Caco-2 (cell line): ENCODE measurements at regions of chr7 and their contacts with region 1.

Region 1: GRCh38 chr7:130941322-130942210 is 207.6 kb upstream of the KLF14 start:
- DNase-seq: peak; percentile 66 to 76
- H3K4me3 ChIP-seq: peak overlapping the region; percentile 45
- H3K4me3 Mint-ChIP-seq: peak overlapping the region; percentile 91
- H3K27ac Mint-ChIP-seq: peak overlapping the region; percentile 96
- H3K4me1 ChIP-seq: peaks cover 7% of the 10 kb centered on the region; the same call in 1 of the 2 replicates
- H3K4me1 Mint-ChIP-seq: peaks cover 16% of the 10 kb centered on the region
- H3K27me3 ChIP-seq: no peaks in the 10 kb centered on the region
- H3K27me3 Mint-ChIP-seq: no peaks in the 10 kb centered on the region
- CTCF ChIP-seq: no peak

Region 2: GRCh38 chr7:130875265-130875741 is 66.3 kb before region 1 on chr7:
- CTCF ChIA-PET with region 1: no interaction called
- POLR2A ChIA-PET with region 1: no interaction called
- intact Hi-C with region 1: no loop called
- DNase-seq: peak; percentile 75 to 86
- H3K4me3 ChIP-seq: no peak overlapping the region
- H3K4me3 Mint-ChIP-seq: no peak overlapping the region
- H3K27ac Mint-ChIP-seq: no peak overlapping the region
- H3K4me1 ChIP-seq: no peaks in the 10 kb centered on the region
- H3K4me1 Mint-ChIP-seq: no peaks in the 10 kb centered on the region
- H3K27me3 ChIP-seq: no peaks in the 10 kb centered on the region
- H3K27me3 Mint-ChIP-seq: no peaks in the 10 kb centered on the region
- CTCF ChIP-seq: peak; percentile 90 to 98

Region 3: GRCh38 chr7:130912862-130913631 is 28.5 kb before region 1 on chr7:
- CTCF ChIA-PET with region 1: interaction called, 5 read pairs
- POLR2A ChIA-PET with region 1: interaction called, 5 read pairs
- intact Hi-C with region 1: loop called (anchors 1 kb)
- DNase-seq: peak; percentile 47 to 55
- H3K4me3 ChIP-seq: peak overlapping the region; percentile 48
- H3K4me3 Mint-ChIP-seq: peak overlapping the region; percentile 94
- H3K27ac Mint-ChIP-seq: peak overlapping the region; percentile 95
- H3K4me1 ChIP-seq: peaks cover 28% of the 10 kb centered on the region
- H3K4me1 Mint-ChIP-seq: peaks cover 37% of the 10 kb centered on the region
- H3K27me3 ChIP-seq: no peaks in the 10 kb centered on the region
- H3K27me3 Mint-ChIP-seq: no peaks in the 10 kb centered on the region
- CTCF ChIP-seq: no peak

Region 4: DNA sequence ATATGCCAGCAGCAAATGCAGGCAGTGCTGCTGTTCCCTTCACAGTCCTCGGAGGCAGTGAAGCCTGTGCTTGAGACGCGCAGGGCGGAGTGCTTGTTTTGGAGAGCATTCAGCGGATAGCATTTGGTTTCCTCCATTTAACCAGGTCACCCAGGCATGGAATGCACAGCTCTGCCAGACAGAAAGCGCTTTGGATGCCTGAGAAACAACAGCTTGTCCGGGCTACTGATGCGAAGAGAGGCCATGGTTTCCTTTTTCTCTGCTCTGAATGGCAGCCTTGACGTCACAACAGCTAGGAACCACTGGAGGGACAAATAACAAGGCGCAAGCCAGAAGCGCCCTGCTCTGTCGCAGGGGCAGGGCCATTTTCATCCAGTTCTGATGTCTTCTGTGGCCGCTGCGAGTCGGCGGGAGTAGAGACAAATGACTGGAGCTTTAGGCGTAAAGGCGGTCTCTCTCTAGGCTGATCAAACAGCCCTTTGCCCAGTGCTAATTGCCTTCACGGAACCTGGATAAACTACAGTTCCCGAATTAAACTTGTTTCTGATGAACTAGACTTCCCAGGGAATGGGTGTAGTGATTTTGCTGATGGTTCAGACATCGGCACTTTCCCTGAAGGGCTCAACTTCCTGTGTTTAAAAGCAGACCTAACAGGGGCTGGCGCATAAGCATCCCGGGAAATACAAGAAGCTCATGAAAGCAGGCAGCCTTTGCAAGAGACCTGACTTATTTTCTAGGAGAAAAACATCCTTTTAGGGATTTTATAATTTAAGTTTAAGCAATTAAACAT is 20.0 kb before region 1 on chr7:
- CTCF ChIA-PET with region 1: no interaction called
- POLR2A ChIA-PET with region 1: interaction called, 10 read pairs
- intact Hi-C with region 1: loop called (anchors 2 kb)
- DNase-seq: no peak
- H3K4me3 ChIP-seq: no peak overlapping the region
- H3K4me3 Mint-ChIP-seq: no peak overlapping the region
- H3K27ac Mint-ChIP-seq: peak overlapping the region; percentile 98
- H3K4me1 ChIP-seq: peaks cover 68% of the 10 kb centered on the region
- H3K4me1 Mint-ChIP-seq: peaks cover 30% of the 10 kb centered on the region
- H3K27me3 ChIP-seq: no peaks in the 10 kb centered on the region
- H3K27me3 Mint-ChIP-seq: no peaks in the 10 kb centered on the region
- CTCF ChIP-seq: no peak

Region 5: DNA sequence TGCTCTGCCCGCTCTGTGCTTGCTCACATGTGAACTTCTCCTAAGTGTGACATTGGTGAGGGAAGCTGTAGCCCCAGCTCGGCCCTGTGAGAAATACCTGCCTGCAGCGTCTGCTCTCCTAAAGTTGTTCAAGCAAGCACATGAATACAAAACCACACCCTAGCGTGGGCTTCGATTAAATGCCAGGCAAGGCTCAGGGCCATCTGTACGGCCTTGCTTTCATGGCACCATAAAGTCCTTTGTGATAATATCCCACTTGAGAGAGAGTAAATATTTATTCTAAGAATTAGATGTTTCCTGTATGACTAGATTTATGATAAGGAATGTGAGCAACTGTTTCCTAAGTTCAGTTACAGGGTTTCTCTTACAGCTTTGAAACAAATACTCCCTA is 55.3 kb after region 1 on chr7:
- CTCF ChIA-PET with region 1: no interaction called
- POLR2A ChIA-PET with region 1: no interaction called
- intact Hi-C with region 1: loop called (anchors 2 kb)
- DNase-seq: peak; percentile 78 to 89
- H3K4me3 ChIP-seq: no peak overlapping the region
- H3K4me3 Mint-ChIP-seq: peak overlapping the region; percentile 50
- H3K27ac Mint-ChIP-seq: peak overlapping the region; percentile 80
- H3K4me1 ChIP-seq: peaks cover 59% of the 10 kb centered on the region
- H3K4me1 Mint-ChIP-seq: peaks cover 54% of the 10 kb centered on the region
- H3K27me3 ChIP-seq: no peaks in the 10 kb centered on the region
- H3K27me3 Mint-ChIP-seq: no peaks in the 10 kb centered on the region
- CTCF ChIP-seq: no peak

Region 6: GRCh38 chr7:131803861-131804260 is 862.3 kb after region 1 on chr7:
- CTCF ChIA-PET with region 1: no interaction called
- POLR2A ChIA-PET with region 1: no interaction called
- intact Hi-C with region 1: no loop called
- DNase-seq: no peak
- H3K4me3 ChIP-seq: no peak overlapping the region
- H3K4me3 Mint-ChIP-seq: no peak overlapping the region
- H3K27ac Mint-ChIP-seq: no peak overlapping the region
- H3K4me1 ChIP-seq: no peaks in the 10 kb centered on the region
- H3K4me1 Mint-ChIP-seq: no peaks in the 10 kb centered on the region
- H3K27me3 ChIP-seq: no peaks in the 10 kb centered on the region
- H3K27me3 Mint-ChIP-seq: peaks cover 10% of the 10 kb centered on the region
- CTCF ChIP-seq: no peak